Prostate gland (tissue), 2 donors: ENCODE measurements at regions of chr6 and their contacts with region 1.

Region 1: GRCh38 chr6:41367700-41368099 is 32.3 kb downstream of the NCR2 start:
- DNase-seq: peak; percentile 34
- H3K4me3 ChIP-seq: no peak overlapping the region
- H3K27ac ChIP-seq: no peak overlapping the region
- H3K4me1 ChIP-seq: peaks cover under 1% of the 10 kb centered on the region
- H3K27me3 ChIP-seq: no peaks in the 10 kb centered on the region
- CTCF ChIP-seq: peak in 3 of 4 experiments; percentile 48 to 68 (median 65)
- POLR2A ChIP-seq: no peak

Region 2: DNA sequence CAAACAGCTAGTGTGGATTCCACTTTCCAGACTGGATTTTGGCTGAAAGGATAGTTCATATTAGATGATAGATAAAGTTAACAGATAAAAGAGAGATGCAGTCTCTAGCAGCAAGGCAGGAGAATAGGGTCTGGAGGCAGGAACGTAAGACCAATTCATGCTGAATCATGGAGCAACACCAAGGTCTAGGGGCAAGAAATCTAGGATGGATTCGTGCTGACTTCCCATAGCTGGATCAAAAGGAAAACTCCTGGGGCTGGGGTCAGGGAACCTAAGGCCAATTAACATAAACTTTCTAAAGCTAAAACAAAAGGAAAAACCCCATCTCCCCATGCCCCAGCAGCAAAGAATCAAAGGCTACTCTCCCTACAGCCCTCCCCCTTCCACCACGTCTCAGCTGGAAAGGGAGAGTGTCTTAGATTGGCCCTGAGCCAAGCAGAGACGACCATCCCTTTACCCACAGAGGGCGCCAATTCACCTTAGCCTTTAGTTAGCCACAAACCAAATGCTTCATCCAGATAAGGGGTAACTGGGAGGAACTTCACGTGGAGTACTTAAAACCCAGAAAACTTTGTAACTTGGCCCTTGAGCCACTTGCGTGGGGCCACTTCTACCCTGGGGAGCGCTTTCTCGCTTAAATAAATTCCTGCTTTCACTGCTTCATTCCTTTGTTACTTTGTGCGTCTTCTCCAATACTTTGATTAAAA is 88.8 kb before region 1 on chr6:
- intact Hi-C with region 1: no loop called
- DNase-seq: peak; percentile 24
- H3K4me3 ChIP-seq: no peak overlapping the region
- H3K27ac ChIP-seq: no peak overlapping the region
- H3K4me1 ChIP-seq: no peaks in the 10 kb centered on the region
- H3K27me3 ChIP-seq: no peaks in the 10 kb centered on the region
- CTCF ChIP-seq: peak in 1 of 4 experiments; percentile 31
- POLR2A ChIP-seq: no peak

Region 3: GRCh38 chr6:41455818-41456217 is 88.1 kb after region 1 on chr6:
- intact Hi-C with region 1: loop called (anchors 5 kb)
- DNase-seq: no peak
- H3K4me3 ChIP-seq: no peak overlapping the region
- H3K27ac ChIP-seq: peak overlapping the region in 1 of 2 donors; percentile 53
- H3K4me1 ChIP-seq: peaks cover 3% of the 10 kb centered on the region
- H3K27me3 ChIP-seq: no peaks in the 10 kb centered on the region
- CTCF ChIP-seq: no peak
- POLR2A ChIP-seq: no peak

Region 4: DNA sequence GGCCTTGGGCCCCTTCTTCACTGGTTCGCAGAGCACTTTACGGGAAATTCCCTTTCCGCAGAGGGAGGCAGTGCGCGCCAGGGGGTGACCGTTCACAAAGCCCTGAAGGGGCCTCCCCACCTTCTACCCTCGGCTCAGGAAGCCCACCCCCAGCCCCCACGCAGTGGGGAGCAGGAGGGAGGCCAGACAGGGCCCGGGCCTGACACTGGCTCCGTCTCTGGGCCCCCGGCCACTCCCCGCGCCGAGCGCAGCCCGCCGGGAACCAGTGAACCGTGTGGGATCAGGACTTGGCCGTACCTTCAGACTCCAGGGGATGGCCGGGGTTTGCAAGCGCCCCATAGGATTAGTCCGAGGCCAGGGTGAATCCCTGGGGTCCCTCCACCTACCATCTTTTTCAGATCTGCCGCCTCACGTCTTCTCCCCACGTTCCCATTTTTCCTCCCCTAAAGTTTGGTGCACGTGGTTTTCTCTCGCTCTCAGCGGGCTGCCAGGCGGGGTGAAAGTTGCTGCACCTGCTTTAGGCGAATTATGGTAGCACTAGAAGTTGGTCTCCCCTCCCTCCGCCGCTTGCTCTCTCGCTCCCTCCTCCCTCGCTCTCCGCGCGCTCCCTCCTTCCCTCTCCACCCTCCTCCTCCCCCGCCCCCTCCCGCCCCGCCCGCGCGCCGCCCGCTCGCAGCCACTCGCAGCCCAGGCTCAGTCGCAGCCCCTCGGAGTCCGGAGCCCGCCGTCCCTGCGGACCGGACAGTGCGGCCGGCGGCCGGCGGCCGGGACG is 178.2 kb after region 1 on chr6 and contains the start of gene FOXP4:
- intact Hi-C with region 1: loop called (anchors 5 kb)
- DNase-seq: peak; percentile 93
- H3K4me3 ChIP-seq: peak within 1 kb of the TSS; percentile 59 to 90
- H3K27ac ChIP-seq: peak within 1 kb of the TSS; percentile 72 to 86
- H3K4me1 ChIP-seq: peaks cover 3% of the 10 kb centered on the region
- H3K27me3 ChIP-seq: no peaks in the 10 kb centered on the region
- CTCF ChIP-seq: no peak
- POLR2A ChIP-seq: no peak
- total RNA-seq, gene FOXP4: 24.8 to 53.5 TPM